GM23248 (cell line): ENCODE measurements at regions of chr4 and their contacts with region 1.

Region 1: GRCh38 chr4:70601422-70602039 is 9.5 kb downstream of the AMBN start:
- DNase-seq: peak; percentile 69
- H3K4me3 ChIP-seq: no peak overlapping the region
- H3K27ac ChIP-seq: no peak overlapping the region
- H3K4me1 ChIP-seq: no peaks in the 10 kb centered on the region
- H3K27me3 ChIP-seq: no peaks in the 10 kb centered on the region

Region 2: GRCh38 chr4:70356185-70356584 is 245.3 kb before region 1 on chr4:
- in situ Hi-C with region 1: no loop called
- DNase-seq: no peak
- H3K4me3 ChIP-seq: no peak overlapping the region
- H3K27ac ChIP-seq: no peak overlapping the region
- H3K4me1 ChIP-seq: no peaks in the 10 kb centered on the region
- H3K27me3 ChIP-seq: no peaks in the 10 kb centered on the region

Region 3: GRCh38 chr4:71713611-71714203 is 1112.2 kb after region 1 on chr4:
- in situ Hi-C with region 1: loop called (anchors 25 kb)
- DNase-seq: peak; percentile 84
- H3K4me3 ChIP-seq: no peak overlapping the region
- H3K27ac ChIP-seq: no peak overlapping the region
- H3K4me1 ChIP-seq: no peaks in the 10 kb centered on the region
- H3K27me3 ChIP-seq: peaks cover 3% of the 10 kb centered on the region; the same call in 1 of the 2 replicates